ENCODE measurements at regions of chr4 and their contacts with region 1.

Region 1: DNA sequence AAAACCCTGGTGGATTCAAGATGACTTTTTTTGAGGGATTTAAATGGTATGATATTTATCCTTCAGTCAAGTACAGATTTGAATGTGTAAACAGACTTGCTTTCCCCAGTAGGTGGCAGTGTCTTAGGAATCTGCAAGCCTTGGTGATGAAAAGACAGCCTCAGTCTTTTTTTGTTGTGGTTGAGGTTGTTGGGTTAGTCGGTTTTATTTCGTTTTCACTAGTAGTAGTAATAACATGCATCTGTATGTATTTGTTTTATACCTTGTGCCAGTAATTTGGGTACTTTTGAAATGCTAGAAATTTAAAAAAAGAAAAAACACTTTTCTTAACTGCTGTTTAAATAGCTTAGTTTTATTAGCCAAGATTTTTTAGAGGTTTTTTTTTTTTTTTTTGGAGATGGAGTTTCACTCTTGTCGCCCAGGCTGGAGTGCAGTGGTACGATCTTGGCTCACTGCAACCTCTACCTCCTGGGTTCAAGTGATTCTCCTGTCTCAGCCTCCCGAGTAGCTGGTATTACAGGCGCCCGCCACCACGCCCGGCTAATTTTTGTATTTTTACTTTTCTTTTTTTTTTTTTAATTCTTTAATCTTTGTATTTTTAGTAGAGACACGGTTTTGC is 39.2 kb downstream of the COPS4 start:
- DNase-seq: peak; percentile 66
- H3K4me3 Mint-ChIP-seq: no peak overlapping the region
- H3K27ac Mint-ChIP-seq: peak overlapping the region; percentile 19
- H3K4me1 Mint-ChIP-seq: peaks cover 29% of the 10 kb centered on the region
- H3K27me3 Mint-ChIP-seq: no peaks in the 10 kb centered on the region

Region 2: DNA sequence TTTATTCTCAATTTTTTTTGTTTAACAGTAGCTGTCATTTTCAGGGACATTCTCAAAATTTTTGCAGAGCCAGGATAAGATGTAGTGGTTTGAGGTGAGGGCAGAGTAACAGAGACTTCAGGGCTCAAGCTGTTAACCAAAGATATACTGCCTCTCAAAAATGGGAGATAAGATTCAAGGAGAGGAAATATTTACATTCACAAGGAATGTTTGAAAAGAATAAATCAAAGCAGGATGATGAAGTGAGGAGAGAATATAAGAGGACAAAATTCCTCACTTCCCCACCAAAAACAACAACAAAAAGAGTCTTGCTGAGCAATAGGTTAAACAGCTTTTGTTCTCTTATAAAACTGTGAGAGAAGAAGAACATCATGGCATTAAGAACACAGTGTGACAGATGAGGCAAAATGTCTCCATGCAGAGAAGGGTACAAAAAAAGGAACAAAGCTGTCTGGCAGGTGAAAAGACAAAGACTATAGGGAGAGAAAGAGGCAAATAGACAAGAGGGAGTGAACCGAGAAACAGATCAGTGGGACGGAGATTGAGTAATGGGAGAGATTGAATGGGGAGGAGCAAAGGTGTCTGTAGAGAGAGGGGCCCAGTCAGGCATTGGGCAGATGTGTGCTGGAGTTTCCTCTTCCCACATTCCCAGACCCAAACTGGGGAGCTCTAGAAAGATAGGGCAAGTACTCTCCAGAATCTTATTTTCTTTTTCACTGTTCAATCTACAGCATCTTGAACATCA is 406.3 kb before region 1 on chr4:
- intact Hi-C with region 1: no loop called
- DNase-seq: no peak
- H3K4me3 Mint-ChIP-seq: no peak overlapping the region
- H3K27ac Mint-ChIP-seq: no peak overlapping the region
- H3K4me1 Mint-ChIP-seq: no peaks in the 10 kb centered on the region
- H3K27me3 Mint-ChIP-seq: peaks cover 5% of the 10 kb centered on the region

Region 3: GRCh38 chr4:83097018-83097417 is 22.8 kb after region 1 on chr4:
- intact Hi-C with region 1: loop called (anchors 2 kb)
- DNase-seq: no peak
- H3K4me3 Mint-ChIP-seq: no peak overlapping the region
- H3K27ac Mint-ChIP-seq: no peak overlapping the region
- H3K4me1 Mint-ChIP-seq: peaks cover 53% of the 10 kb centered on the region
- H3K27me3 Mint-ChIP-seq: no peaks in the 10 kb centered on the region

Region 4: DNA sequence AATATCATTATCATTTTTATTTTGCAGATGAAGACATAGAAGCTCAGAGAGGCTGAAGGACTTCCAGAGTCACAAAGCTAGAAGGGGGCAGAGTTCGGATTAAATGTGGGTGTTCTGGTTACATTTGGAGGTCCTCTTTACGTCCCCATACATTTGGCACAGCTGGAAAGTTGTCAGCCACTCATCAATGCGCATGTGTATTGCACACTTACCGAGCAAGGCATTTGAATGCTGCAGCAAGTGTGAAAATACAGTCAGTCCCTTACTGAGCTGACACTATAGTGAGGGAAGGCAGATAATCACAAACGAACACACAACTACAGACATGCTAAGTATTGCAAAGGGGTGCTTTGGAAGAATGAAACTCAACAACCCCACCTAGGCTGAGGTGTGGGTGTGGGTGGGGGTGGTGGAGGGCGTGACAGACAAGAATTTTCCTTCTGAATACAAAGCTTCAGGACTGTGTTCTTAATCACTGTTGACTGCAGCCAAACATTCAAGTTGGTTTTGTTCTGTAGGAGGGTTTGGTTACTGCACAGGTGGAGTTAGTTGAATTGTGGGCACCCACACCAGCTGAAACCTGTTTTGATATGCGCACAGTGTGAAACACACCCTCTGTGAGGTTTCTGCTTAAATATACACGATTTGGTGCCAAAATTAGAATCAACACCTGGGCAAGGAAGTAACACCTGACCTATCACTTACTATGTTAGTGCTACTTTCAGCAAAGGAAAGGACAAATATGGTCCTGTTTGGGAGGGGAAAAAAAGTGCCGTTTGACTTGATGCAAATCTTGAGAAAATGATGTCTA is 138.1 kb after region 1 on chr4:
- intact Hi-C with region 1: loop called (anchors 1 kb)
- DNase-seq: peak; percentile 59
- H3K4me3 Mint-ChIP-seq: peak overlapping the region; percentile 40
- H3K27ac Mint-ChIP-seq: peak overlapping the region; percentile 59
- H3K4me1 Mint-ChIP-seq: peaks cover 79% of the 10 kb centered on the region
- H3K27me3 Mint-ChIP-seq: peaks cover 5% of the 10 kb centered on the region

Region 5: GRCh38 chr4:83252782-83253405 is 178.7 kb after region 1 on chr4:
- intact Hi-C with region 1: loop called (anchors 1 kb)
- DNase-seq: peak; percentile 62
- H3K4me3 Mint-ChIP-seq: no peak overlapping the region
- H3K27ac Mint-ChIP-seq: no peak overlapping the region
- H3K4me1 Mint-ChIP-seq: peaks cover 37% of the 10 kb centered on the region
- H3K27me3 Mint-ChIP-seq: peaks cover 7% of the 10 kb centered on the region

Region 6: GRCh38 chr4:83276299-83277040 is 202.3 kb after region 1 on chr4:
- intact Hi-C with region 1: loop called (anchors 1 kb)
- DNase-seq: no peak
- H3K4me3 Mint-ChIP-seq: no peak overlapping the region
- H3K27ac Mint-ChIP-seq: peak overlapping the region; percentile 79
- H3K4me1 Mint-ChIP-seq: peaks cover 30% of the 10 kb centered on the region
- H3K27me3 Mint-ChIP-seq: peaks cover 2% of the 10 kb centered on the region

Measured in activated T-helper 1 cell treated with anti-CD3 and anti-CD28 coated beads, Interleukin-12 subunit alpha, Interleukin-12 subunit beta, Interleukin-2, Interleukin-4 antibody, amounts not matched to agents 30 ng/mL and 10 ng/mL and 1 ng/mL, durations not matched to agents 14 hours and 24 hours and 36 hours (primary cell).